CD8-positive, alpha-beta T cell (primary cell): ENCODE measurements at regions of chr6 and their contacts with region 1.

Region 1: GRCh38 chr6:161091972-161092701 is 100.6 kb downstream of the MAP3K4 start:
- DNase-seq: no peak
- ATAC-seq: no peak
- H3K4me3 ChIP-seq: no peak overlapping the region
- H3K4me3 Mint-ChIP-seq: no peak overlapping the region
- H3K27ac ChIP-seq: no peak overlapping the region
- H3K27ac Mint-ChIP-seq: no peak overlapping the region
- H3K4me1 ChIP-seq: no peaks in the 10 kb centered on the region
- H3K4me1 Mint-ChIP-seq: no peaks in the 10 kb centered on the region
- H3K27me3 ChIP-seq: no peaks in the 10 kb centered on the region
- H3K27me3 Mint-ChIP-seq: no peaks in the 10 kb centered on the region
- CTCF ChIP-seq: no peak

Region 2: GRCh38 chr6:161057103-161058091 is 34.7 kb before region 1 on chr6:
- CTCF ChIA-PET with region 1: no interaction called
- POLR2A ChIA-PET with region 1: no interaction called
- intact Hi-C with region 1: loop called in 1 of 2 experiments (anchors 1 kb)
- DNase-seq: no peak
- ATAC-seq: no peak
- H3K4me3 ChIP-seq: no peak overlapping the region
- H3K4me3 Mint-ChIP-seq: no peak overlapping the region
- H3K27ac ChIP-seq: no peak overlapping the region
- H3K27ac Mint-ChIP-seq: peak overlapping the region; percentile 21
- H3K4me1 ChIP-seq: no peaks in the 10 kb centered on the region
- H3K4me1 Mint-ChIP-seq: peaks cover 16% of the 10 kb centered on the region
- H3K27me3 ChIP-seq: no peaks in the 10 kb centered on the region
- H3K27me3 Mint-ChIP-seq: no peaks in the 10 kb centered on the region
- CTCF ChIP-seq: no peak

Region 3: GRCh38 chr6:161111261-161111660 is 19.1 kb after region 1 on chr6:
- CTCF ChIA-PET with region 1: no interaction called
- POLR2A ChIA-PET with region 1: no interaction called
- intact Hi-C with region 1: loop called in 1 of 2 experiments (anchors 2 kb)
- DNase-seq: peak in 3 of 9 experiments; percentile 21 to 56 (median 34)
- ATAC-seq: peak; percentile 97
- H3K4me3 ChIP-seq: no peak overlapping the region
- H3K4me3 Mint-ChIP-seq: peak overlapping the region; percentile 1
- H3K27ac ChIP-seq: no peak overlapping the region
- H3K27ac Mint-ChIP-seq: peak overlapping the region; percentile 89
- H3K4me1 ChIP-seq: peaks cover 8% of the 10 kb centered on the region
- H3K4me1 Mint-ChIP-seq: peaks cover 25% of the 10 kb centered on the region
- H3K27me3 ChIP-seq: no peaks in the 10 kb centered on the region
- H3K27me3 Mint-ChIP-seq: no peaks in the 10 kb centered on the region
- CTCF ChIP-seq: no peak

Region 4: GRCh38 chr6:161356167-161356854 is 264.2 kb after region 1 on chr6:
- CTCF ChIA-PET with region 1: no interaction called
- POLR2A ChIA-PET with region 1: no interaction called
- intact Hi-C with region 1: no loop called
- DNase-seq: no peak
- ATAC-seq: no peak
- H3K4me3 ChIP-seq: no peak overlapping the region
- H3K4me3 Mint-ChIP-seq: no peak overlapping the region
- H3K27ac ChIP-seq: no peak overlapping the region
- H3K27ac Mint-ChIP-seq: no peak overlapping the region
- H3K4me1 ChIP-seq: no peaks in the 10 kb centered on the region
- H3K4me1 Mint-ChIP-seq: peaks cover 3% of the 10 kb centered on the region
- H3K27me3 ChIP-seq: no peaks in the 10 kb centered on the region
- H3K27me3 Mint-ChIP-seq: peaks cover 2% of the 10 kb centered on the region
- CTCF ChIP-seq: no peak